ENCODE measurements at regions of chr16 and their contacts with region 1.

Region 1: GRCh38 chr16:56576585-56577293 is 11.9 kb downstream of the MT4 start:
- DNase-seq: peak; percentile 92
- H3K4me3 Mint-ChIP-seq: no peak overlapping the region
- H3K27ac Mint-ChIP-seq: peak overlapping the region; percentile 17
- H3K4me1 Mint-ChIP-seq: peaks cover 10% of the 10 kb centered on the region
- H3K27me3 Mint-ChIP-seq: no peaks in the 10 kb centered on the region
- CTCF ChIP-seq: peak; percentile 92

Region 2: DNA sequence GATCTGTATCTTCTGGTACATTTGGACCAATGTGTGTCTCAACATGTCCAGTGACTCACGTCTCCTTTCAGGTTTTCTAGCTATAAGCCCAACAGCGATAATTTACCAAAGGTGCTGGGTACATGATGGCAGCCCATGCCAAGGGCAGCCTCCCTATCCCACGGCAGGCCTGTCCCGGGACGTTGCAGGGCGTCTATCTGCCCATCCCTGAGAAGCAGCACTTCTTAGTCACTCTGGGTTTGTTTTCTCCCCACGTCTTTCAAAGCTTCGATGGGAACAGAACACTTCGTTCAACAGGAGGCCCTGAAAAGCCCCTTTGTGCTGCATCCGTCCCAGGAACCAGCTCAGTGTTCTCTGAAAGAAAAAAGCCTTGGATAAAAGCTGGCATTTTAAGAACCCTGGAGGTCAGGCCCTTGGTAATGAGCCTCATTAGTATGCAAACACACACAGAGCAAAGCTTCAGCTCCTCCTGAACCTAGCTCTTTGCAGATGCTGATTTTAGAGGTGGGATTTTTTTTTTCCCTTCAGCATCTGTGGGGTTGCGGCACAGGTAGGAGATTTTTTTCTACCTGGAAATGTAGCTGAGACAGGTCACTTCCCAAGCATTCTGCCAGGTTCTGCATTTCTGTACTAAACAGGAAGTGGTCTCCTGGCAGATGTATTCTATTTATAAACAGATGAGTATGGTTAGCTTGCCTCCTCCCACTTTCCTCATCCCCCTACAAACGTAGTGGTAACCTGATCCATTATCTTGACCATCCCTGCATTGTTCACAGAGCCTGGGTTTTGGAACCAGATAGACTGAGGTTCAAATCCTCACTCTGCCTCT is 29.4 kb before region 1 on chr16:
- CTCF ChIA-PET with region 1: interaction called, 5 read pairs
- POLR2A ChIA-PET with region 1: interaction called, 13 read pairs
- intact Hi-C with region 1: no loop called
- DNase-seq: peak; percentile 60
- H3K4me3 Mint-ChIP-seq: no peak overlapping the region
- H3K27ac Mint-ChIP-seq: no peak overlapping the region
- H3K4me1 Mint-ChIP-seq: peaks cover 20% of the 10 kb centered on the region
- H3K27me3 Mint-ChIP-seq: no peaks in the 10 kb centered on the region
- CTCF ChIP-seq: no peak

Region 3: GRCh38 chr16:56591377-56592060 is 14.8 kb after region 1 on chr16:
- CTCF ChIA-PET with region 1: interaction called, 22 read pairs
- POLR2A ChIA-PET with region 1: no interaction called
- intact Hi-C with region 1: no loop called
- DNase-seq: no peak
- H3K4me3 Mint-ChIP-seq: no peak overlapping the region
- H3K27ac Mint-ChIP-seq: no peak overlapping the region
- H3K4me1 Mint-ChIP-seq: no peaks in the 10 kb centered on the region
- H3K27me3 Mint-ChIP-seq: no peaks in the 10 kb centered on the region
- CTCF ChIP-seq: no peak

Region 4: GRCh38 chr16:56643080-56643778 is 66.5 kb after region 1 on chr16:
- CTCF ChIA-PET with region 1: interaction called, 5 read pairs
- POLR2A ChIA-PET with region 1: no interaction called
- intact Hi-C with region 1: loop called (anchors 1 kb)
- DNase-seq: peak; percentile 86
- H3K4me3 Mint-ChIP-seq: peak overlapping the region; percentile 25
- H3K27ac Mint-ChIP-seq: no peak overlapping the region
- H3K4me1 Mint-ChIP-seq: peaks cover 3% of the 10 kb centered on the region
- H3K27me3 Mint-ChIP-seq: no peaks in the 10 kb centered on the region
- CTCF ChIP-seq: peak; percentile 62